Dorsolateral prefrontal cortex (tissue), 120 donors: ENCODE measurements at regions of chr15 and their contacts with region 1.

Region 1: DNA sequence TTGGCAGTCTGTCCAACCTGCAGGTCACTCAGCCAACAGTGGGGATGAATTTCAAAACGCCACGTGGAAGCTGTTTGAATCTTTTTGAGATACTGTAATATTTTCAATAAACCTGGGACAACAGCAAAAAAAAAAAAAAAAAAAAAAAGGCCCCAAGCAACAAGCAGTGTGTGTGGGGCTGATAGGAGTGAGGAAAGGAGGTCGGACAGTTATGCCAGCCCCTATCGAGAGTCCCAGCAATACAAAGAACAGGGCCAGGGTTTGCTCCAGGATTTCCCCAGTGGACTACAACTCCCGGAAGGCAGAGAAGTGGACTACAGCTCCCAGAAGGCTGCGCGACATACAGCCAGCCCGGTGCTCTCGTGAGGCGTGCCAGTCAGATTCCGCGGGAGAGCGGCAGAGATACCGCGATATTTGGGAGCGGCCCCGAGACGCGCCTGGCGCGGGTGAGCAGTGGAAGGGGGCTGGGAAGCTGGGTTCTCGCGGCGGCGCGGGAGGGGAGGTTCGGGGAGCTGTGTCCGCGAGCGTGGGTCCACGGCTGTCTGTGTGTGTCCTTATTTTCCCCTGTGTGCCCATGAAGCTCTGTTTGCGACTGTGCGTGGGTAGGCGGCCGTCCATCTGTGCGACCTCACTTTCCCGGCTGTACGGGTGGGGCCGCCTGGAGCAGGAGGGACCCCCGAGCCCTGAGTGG is at the start of gene PPCDC:
- DNase-seq: peak; percentile 92 to 98 (median 97)
- H3K4me3 ChIP-seq: peak within 1 kb of the TSS; percentile 49 to 98 (median 89)
- H3K27ac ChIP-seq: peak within 1 kb of the TSS in 57 of 59 donors; percentile 27 to 96 (median 88)
- H3K27me3 ChIP-seq: no peaks in the 10 kb centered on the region
- CTCF ChIP-seq: peak in 47 of 56 donors; percentile 3 to 62 (median 33)
- total RNA-seq, gene PPCDC: 3.9 to 23.6 (median 9.9) TPM

Region 2: DNA sequence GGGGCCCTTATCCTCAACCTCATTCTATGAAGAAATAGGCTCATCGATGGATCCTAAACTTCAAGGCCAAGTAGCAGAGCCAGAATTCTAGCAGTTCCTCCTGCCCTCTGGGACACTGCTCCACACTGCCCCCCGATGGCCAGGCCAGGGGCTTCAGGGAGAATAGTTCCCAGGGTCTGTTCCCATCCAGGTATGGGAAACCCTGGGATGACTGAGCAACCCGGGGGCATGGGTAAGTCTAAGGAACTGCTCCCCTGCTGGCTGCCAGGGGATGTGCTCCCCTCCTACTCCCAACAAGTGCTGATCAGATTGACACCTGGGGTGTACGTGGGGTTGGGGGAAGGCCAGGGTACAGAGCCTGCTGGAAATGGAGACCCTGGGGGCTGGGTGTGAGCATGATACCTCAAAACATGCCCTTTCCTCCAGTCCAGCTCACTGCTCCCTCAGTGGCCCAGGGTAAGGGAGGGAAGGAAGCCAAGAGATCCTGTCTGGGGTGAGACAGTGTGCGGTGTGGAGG is 188.0 kb before region 1 on chr15:
- intact Hi-C with region 1: no loop called
- DNase-seq: peak in 3 of 10 donors; percentile 33 to 62 (median 34)
- H3K4me3 ChIP-seq: no peak overlapping the region
- H3K27ac ChIP-seq: no peak overlapping the region
- H3K27me3 ChIP-seq: no peaks in the 10 kb centered on the region
- CTCF ChIP-seq: peak; percentile 26 to 77 (median 64)

Region 3: GRCh38 chr15:74956648-74957300 is 66.6 kb before region 1 on chr15 and contains the start of gene RPP25:
- intact Hi-C with region 1: loop called (anchors 1 kb)
- DNase-seq: peak; percentile 42 to 82 (median 59)
- H3K4me3 ChIP-seq: peak within 1 kb of the TSS; percentile 49 to 81 (median 67)
- H3K27ac ChIP-seq: peak within 1 kb of the TSS in 52 of 59 donors; percentile 10 to 84 (median 65)
- H3K27me3 ChIP-seq: peaks cover 0 to 20% (median 3%) of the 10 kb centered on the region in 45 donors
- CTCF ChIP-seq: no peak
- total RNA-seq, gene RPP25: 5.0 to 16.7 (median 8.5) TPM

Region 4: DNA sequence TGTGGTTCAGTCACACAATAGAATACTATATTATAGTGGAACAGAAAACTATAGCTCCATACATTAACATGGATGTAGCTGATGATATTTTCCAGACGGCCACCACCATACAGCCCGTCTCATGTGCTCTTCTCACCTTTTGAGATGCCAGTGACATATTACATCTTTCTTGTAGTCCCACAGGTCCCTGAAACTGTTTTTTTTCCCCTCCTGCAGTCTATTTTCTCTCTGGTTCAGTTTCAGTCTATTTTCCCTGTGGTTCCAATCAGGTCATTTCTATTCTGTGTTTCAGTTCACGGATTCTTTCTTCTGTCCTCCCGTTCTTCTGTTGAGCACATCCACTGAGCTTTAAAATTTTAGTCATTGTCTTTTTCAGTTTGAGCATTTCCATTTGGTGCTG is 72.3 kb after region 1 on chr15:
- intact Hi-C with region 1: no loop called
- DNase-seq: no peak
- H3K4me3 ChIP-seq: no peak overlapping the region
- H3K27ac ChIP-seq: no peak overlapping the region
- H3K27me3 ChIP-seq: no peaks in the 10 kb centered on the region
- CTCF ChIP-seq: no peak

Region 5: DNA sequence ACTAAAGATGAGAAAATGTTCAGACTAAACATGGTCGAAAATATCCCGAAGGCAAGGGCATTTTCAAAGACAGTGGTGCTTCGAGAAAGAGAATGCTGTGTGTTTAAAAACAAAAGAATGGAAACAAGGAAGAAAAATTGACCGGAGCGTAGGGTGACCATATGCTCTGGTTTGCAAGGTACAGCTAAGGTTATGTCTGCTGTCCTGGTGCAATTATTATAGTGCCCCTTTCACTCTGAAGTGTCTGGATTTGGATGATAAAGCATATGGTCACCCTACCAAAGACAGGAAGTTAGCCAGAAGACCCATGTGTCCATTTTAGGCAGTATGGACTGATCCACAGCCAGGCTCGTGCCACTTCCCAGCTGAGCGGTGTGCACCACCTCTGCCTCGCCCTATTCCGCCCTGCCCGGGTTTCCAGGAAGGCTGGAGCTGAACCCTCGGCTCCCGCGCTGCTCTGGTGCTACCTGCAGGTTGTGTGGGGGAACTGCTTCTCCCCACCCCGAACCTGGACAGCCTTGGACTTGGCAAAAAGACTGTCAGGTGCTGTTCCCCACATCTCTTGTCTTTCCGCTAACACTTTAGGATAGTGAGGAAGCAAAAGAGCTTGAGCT is 284.6 kb after region 1 on chr15:
- intact Hi-C with region 1: loop called in 1 of 2 experiments (anchors 10 kb)
- DNase-seq: peak in 1 of 10 donors; percentile 6
- H3K4me3 ChIP-seq: no peak overlapping the region
- H3K27ac ChIP-seq: no peak overlapping the region
- H3K27me3 ChIP-seq: peaks cover 0 to 32% (median 5%) of the 10 kb centered on the region in 45 donors
- CTCF ChIP-seq: peak in 10 of 56 donors; percentile 9 to 35 (median 18)